CD8-positive, alpha-beta T cell (primary cell): ENCODE measurements at regions of chr5 and their contacts with region 1.

Region 1: DNA sequence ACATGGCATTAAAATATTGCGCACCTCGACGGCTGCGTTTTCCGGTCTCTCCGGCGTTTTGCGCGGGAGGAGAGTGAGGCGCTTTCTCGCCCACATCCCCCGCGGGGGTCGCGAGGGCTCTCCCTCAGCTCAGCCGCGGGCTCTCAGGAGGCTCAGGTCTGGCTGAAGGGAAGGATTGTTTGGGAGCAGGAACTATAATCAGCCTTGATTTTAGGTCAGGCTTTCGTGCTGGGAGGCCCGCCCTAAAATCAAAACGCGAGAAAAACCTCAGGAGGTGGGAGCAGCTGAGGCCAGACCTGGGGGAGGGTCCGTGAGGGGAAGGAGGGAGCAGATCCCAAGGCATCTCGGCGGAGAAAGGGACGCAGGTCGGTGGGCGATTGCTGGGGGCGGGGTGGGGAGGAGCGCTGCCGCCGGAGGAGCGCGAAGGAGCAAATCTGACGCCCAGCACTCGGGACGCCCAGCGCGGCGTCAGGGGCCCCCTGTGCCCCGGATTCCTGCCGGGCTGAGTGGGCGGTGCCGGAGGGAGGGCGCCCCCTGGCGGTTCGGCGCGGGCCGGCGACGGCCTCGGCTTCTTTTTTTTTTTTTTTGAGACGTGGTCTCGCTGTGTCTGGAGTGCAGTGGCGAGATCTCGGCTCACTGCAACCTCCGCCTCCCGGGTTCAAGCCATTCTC is 18.7 kb upstream of the RNF130 start:
- DNase-seq: peak; percentile 62 to 90 (median 81)
- ATAC-seq: peak; percentile 71
- H3K4me3 ChIP-seq: peak overlapping the region; percentile 57
- H3K4me3 Mint-ChIP-seq: peak overlapping the region; percentile 86
- H3K27ac ChIP-seq: peak overlapping the region in 1 of 2 experiments; percentile 42
- H3K27ac Mint-ChIP-seq: peak overlapping the region; percentile 88
- H3K4me1 ChIP-seq: peaks cover 16% of the 10 kb centered on the region
- H3K4me1 Mint-ChIP-seq: peaks cover 27% of the 10 kb centered on the region
- H3K27me3 ChIP-seq: no peaks in the 10 kb centered on the region
- H3K27me3 Mint-ChIP-seq: peaks cover 4% of the 10 kb centered on the region
- CTCF ChIP-seq: peak; percentile 68

Region 2: GRCh38 chr5:179089502-179089901 is 1000.7 kb before region 1 on chr5:
- CTCF ChIA-PET with region 1: no interaction called
- POLR2A ChIA-PET with region 1: no interaction called
- intact Hi-C with region 1: no loop called
- DNase-seq: no peak
- ATAC-seq: no peak
- H3K4me3 ChIP-seq: no peak overlapping the region
- H3K4me3 Mint-ChIP-seq: no peak overlapping the region
- H3K27ac ChIP-seq: no peak overlapping the region
- H3K27ac Mint-ChIP-seq: no peak overlapping the region
- H3K4me1 ChIP-seq: no peaks in the 10 kb centered on the region
- H3K4me1 Mint-ChIP-seq: no peaks in the 10 kb centered on the region
- H3K27me3 ChIP-seq: no peaks in the 10 kb centered on the region
- H3K27me3 Mint-ChIP-seq: no peaks in the 10 kb centered on the region
- CTCF ChIP-seq: no peak

Region 3: DNA sequence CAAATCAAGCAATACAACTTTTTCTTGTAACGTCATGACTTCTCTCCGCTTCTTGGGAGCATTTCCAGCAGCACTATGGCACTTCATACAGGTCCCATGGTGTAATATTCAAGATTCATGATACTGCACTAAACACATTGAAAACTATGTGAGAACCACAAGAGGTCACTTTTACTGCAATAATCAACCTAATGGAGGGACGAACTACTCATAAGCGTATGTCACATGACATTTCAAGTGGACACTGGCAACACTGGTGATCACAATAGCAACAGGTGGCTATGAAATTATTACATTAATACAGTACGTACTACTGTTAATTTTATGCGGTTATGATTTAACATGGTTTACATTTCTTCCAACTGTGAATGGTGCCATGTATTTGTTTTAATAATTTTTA is 103.9 kb before region 1 on chr5:
- CTCF ChIA-PET with region 1: no interaction called
- POLR2A ChIA-PET with region 1: no interaction called
- intact Hi-C with region 1: loop called in 1 of 2 experiments (anchors 5 kb)
- DNase-seq: no peak
- ATAC-seq: no peak
- H3K4me3 ChIP-seq: no peak overlapping the region
- H3K4me3 Mint-ChIP-seq: no peak overlapping the region
- H3K27ac ChIP-seq: no peak overlapping the region
- H3K27ac Mint-ChIP-seq: no peak overlapping the region
- H3K4me1 ChIP-seq: no peaks in the 10 kb centered on the region
- H3K4me1 Mint-ChIP-seq: no peaks in the 10 kb centered on the region
- H3K27me3 ChIP-seq: no peaks in the 10 kb centered on the region
- H3K27me3 Mint-ChIP-seq: no peaks in the 10 kb centered on the region
- CTCF ChIP-seq: no peak

Region 4: GRCh38 chr5:180021805-180022217 is 68.4 kb before region 1 on chr5:
- CTCF ChIA-PET with region 1: no interaction called
- POLR2A ChIA-PET with region 1: no interaction called
- intact Hi-C with region 1: loop called in 1 of 2 experiments (anchors 5 kb)
- DNase-seq: no peak
- ATAC-seq: no peak
- H3K4me3 ChIP-seq: no peak overlapping the region
- H3K4me3 Mint-ChIP-seq: no peak overlapping the region
- H3K27ac ChIP-seq: no peak overlapping the region
- H3K27ac Mint-ChIP-seq: no peak overlapping the region
- H3K4me1 ChIP-seq: no peaks in the 10 kb centered on the region
- H3K4me1 Mint-ChIP-seq: no peaks in the 10 kb centered on the region
- H3K27me3 ChIP-seq: no peaks in the 10 kb centered on the region
- H3K27me3 Mint-ChIP-seq: no peaks in the 10 kb centered on the region
- CTCF ChIP-seq: no peak